Tibial artery (tissue), 4 donors: ENCODE measurements at regions of chr6 and their contacts with region 1.

Region 1: GRCh38 chr6:32984605-32985389 is 16.4 kb downstream of the BRD2 start:
- DNase-seq: peak; percentile 91 to 94
- H3K4me3 ChIP-seq: no peak overlapping the region
- H3K27ac ChIP-seq: no peak overlapping the region
- H3K4me1 ChIP-seq: peaks cover 0 to 4% (median 0%) of the 10 kb centered on the region in 4 donors
- H3K27me3 ChIP-seq: no peaks in the 10 kb centered on the region
- CTCF ChIP-seq: peak; percentile 86 to 89

Region 2: GRCh38 chr6:32885698-32886286 is 99.0 kb before region 1 on chr6:
- intact Hi-C with region 1: loop called (anchors 2 kb)
- DNase-seq: no peak
- H3K4me3 ChIP-seq: no peak overlapping the region
- H3K27ac ChIP-seq: no peak overlapping the region
- H3K4me1 ChIP-seq: peaks cover 0 to 11% (median 0%) of the 10 kb centered on the region in 4 donors
- H3K27me3 ChIP-seq: no peaks in the 10 kb centered on the region
- CTCF ChIP-seq: peak; percentile 60 to 70

Region 3: DNA sequence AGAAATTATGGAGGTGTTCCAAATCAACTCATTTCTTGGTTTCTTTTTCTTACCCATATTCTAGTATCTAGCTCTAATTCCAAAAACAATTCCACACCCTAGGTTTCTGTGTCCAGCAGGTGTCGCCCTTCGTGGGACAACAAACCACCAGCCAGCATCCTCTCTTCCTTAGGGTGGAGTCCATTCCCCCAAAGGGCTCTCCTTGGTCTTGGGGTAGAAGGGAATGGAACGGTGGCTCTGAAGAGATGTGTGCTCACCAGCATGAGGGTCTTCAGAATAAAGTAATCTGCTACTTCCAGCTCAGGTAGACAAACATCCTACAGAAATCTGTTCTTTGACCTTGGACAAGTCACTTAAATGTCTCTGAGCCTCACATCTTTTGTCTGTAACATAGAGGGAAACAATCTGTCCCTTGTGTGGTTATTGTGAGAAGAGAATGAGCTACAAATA is 51.1 kb before region 1 on chr6:
- intact Hi-C with region 1: loop called (anchors 2 kb)
- DNase-seq: peak; percentile 84 to 87
- H3K4me3 ChIP-seq: no peak overlapping the region
- H3K27ac ChIP-seq: no peak overlapping the region
- H3K4me1 ChIP-seq: no peaks in the 10 kb centered on the region
- H3K27me3 ChIP-seq: peaks cover 0 to 3% of the 10 kb centered on the region in 2 donors
- CTCF ChIP-seq: peak; percentile 67 to 73

Region 4: DNA sequence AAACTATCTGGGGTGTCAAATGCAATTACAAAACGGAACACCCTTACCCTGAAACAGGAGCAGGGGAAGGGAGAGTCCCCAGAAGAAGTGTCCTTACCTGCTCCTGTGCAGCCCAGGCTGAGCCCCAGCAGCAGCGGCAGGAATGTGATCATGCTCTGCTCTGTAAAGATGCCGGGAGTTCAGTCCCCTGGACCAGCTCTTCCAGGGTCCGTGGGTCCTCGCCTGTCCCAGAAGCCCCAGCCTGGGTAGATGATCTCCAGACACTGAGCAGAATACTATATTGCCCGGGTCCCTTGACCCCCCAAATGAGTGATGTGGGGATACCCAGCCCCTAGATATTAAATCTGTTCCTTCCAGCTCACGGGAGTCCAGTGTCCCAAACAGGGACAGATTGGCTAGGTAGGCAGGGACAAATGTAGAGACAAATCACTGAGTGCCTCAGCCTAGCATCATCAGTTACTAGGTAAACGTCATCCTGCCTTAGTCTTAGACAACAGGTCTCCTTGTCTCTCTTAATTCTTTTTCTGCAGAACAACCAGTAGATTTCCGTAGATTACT is 44.1 kb before region 1 on chr6 and contains the start of gene HLA-DMB:
- intact Hi-C with region 1: loop called (anchors 2 kb)
- DNase-seq: peak in 1 of 2 donors; percentile 62
- H3K4me3 ChIP-seq: peak within 1 kb of the TSS; percentile 38 to 41
- H3K27ac ChIP-seq: peak within 1 kb of the TSS in 1 of 2 donors; percentile 11
- H3K4me1 ChIP-seq: peaks cover 0 to 9% (median 3%) of the 10 kb centered on the region in 4 donors
- H3K27me3 ChIP-seq: peaks cover 0 to 10% of the 10 kb centered on the region in 2 donors
- CTCF ChIP-seq: no peak

Region 5: DNA sequence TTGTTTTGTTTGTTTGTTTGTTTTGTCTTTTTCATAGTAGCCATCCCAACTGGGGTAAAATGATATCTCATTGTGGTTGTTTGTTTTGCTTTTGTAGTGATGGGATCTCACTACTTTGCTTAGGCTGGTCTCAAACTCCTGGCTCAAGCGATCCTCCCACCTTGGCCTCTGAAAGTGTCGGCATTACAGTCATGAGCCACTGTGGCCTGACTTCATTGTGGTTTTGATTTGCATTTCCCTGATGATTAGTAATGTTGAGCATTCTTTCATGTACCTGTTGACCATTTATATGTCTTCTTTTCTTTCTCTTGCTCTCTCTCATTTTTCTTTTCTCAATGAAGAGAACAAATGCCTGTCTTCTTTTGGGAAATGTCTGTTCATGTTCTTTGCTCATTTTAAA is 55.4 kb after region 1 on chr6:
- intact Hi-C with region 1: no loop called
- DNase-seq: no peak
- H3K4me3 ChIP-seq: no peak overlapping the region
- H3K27ac ChIP-seq: no peak overlapping the region
- H3K4me1 ChIP-seq: no peaks in the 10 kb centered on the region
- H3K27me3 ChIP-seq: peaks cover 0 to 8% of the 10 kb centered on the region in 2 donors
- CTCF ChIP-seq: no peak

Region 6: GRCh38 chr6:33050014-33050810 is 65.4 kb after region 1 on chr6:
- intact Hi-C with region 1: no loop called
- DNase-seq: no peak
- H3K4me3 ChIP-seq: no peak overlapping the region
- H3K27ac ChIP-seq: no peak overlapping the region
- H3K4me1 ChIP-seq: no peaks in the 10 kb centered on the region
- H3K27me3 ChIP-seq: peaks cover 0 to 24% of the 10 kb centered on the region in 2 donors
- CTCF ChIP-seq: no peak